ENCODE measurements at regions of chr22 and their contacts with region 1.

Region 1: DNA sequence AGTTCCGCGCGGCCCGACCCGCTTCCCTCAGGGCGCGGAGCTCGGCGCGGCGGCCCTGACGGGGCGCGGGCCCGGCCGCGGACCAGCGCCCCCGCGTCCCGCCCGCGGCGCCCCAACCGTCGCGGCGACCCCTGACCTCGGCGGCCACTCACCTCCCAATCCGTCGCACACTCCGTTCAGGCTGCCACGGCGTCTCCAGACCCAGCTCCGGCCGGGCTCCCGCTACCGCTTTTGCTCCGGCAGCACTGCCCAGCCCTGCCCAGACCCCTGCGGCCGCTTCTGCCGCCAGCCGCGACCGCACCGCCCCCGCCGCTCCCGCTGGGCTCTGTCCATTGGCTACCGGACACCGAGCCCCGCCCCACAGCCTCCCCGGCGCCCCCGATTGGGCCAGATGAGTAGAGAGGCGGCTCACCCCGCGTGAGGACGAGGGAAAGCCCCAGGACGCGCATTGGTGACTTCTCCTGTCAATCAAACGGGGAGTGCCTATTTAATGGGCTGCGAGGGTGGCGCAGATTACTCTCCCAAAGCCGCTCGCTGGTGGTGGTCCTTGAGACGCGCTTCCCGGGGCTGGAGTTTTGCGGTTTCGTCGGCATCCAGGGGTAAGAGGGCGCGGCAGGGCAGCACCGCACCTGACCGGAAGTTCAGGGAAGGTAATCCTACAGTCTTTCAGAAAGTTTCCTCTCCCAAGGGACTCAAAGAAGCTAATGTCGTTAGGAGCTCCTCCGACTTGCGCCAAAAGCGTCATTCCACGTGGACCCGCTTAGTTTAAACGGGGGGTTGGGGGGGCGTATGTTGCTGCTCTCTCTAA is at the start of gene PACSIN2:
- DNase-seq: peak; percentile 99 to 100
- H3K4me3 ChIP-seq: peak within 1 kb of the TSS; percentile 87 to 100
- H3K27ac ChIP-seq: peak within 1 kb of the TSS; percentile 77 to 79
- H3K4me1 ChIP-seq: peaks cover 0 to 37% (median 15%) of the 10 kb centered on the region in 4 donors
- H3K27me3 ChIP-seq: no peaks in the 10 kb centered on the region
- CTCF ChIP-seq: no peak

Region 2: DNA sequence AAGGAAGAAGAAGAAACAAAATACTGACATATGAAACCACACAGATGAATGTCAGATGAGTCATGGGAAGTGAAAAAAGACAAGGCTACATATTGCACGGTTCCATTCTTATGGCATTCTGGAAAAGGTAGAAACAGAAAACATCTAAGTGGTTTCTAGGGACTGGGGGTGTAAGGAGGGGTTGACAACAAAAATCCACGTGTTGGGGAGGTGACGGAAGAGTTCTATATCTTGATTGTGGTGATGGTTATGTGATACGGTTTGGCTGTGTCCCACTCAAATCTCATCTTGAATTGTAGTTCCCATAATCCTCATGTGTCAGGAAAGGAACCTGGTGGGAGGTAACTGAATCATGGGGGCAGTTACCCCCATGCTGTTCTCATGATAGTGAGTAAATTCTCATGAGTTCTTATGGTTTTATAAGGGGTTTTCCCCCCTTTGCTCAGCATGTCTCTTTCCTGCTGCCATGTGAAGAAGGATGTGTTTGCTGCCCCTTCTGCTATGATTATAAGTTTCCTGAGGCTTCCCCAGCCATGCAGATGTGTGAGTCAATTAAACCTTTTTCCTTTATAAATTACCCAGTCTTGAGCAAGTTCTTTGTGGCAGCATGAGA is 151.6 kb before region 1 on chr22:
- intact Hi-C with region 1: loop called (anchors 10 kb)
- DNase-seq: no peak
- H3K4me3 ChIP-seq: no peak overlapping the region
- H3K27ac ChIP-seq: no peak overlapping the region
- H3K4me1 ChIP-seq: peaks cover 0 to 20% (median 4%) of the 10 kb centered on the region in 4 donors
- H3K27me3 ChIP-seq: no peaks in the 10 kb centered on the region
- CTCF ChIP-seq: no peak

Region 3: DNA sequence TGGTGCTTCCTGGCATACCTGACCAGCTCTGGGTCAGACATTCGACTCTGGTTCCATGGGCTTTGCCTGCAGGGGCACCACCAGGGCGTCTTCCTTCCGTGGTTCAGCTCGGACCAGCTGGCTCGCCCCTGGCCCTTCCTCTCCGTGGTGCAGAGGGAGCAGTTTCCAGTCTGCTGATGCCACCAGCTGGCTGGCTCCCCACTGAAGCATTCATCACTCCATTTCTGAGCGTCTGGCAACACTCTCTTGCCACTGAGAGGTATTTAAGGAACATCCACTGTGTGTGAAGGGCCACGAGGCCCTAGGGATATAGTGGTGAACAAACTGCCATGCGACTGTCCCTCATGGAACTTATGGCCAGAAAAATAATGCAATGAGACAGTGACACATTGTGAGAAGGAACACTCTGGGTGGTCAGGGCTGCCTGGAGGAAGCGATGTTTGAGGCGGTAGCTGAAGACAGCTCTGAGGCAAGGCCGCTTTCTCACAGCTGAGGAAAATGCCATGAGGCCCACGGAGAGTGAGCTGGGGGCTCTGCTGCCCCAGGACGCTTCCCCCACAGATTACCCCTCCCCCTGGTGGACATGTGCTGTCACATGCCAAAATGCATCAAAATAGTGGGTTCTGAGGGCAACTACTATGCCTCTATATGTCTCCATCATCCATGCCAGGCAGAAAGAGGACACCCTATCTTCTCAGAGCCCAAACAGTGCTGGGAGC is 113.1 kb before region 1 on chr22:
- intact Hi-C with region 1: loop called (anchors 10 kb)
- DNase-seq: no peak
- H3K4me3 ChIP-seq: no peak overlapping the region
- H3K27ac ChIP-seq: peak overlapping the region; percentile 33 to 50
- H3K4me1 ChIP-seq: peaks cover 0 to 58% (median 48%) of the 10 kb centered on the region in 4 donors
- H3K27me3 ChIP-seq: no peaks in the 10 kb centered on the region
- CTCF ChIP-seq: peak in 1 of 2 experiments; percentile 6